H1 (cell line): ENCODE measurements at regions of chr1 and their contacts with region 1.

Region 1: GRCh38 chr1:160607011-160607671 is 27.8 kb upstream of the CD84 start:
- DNase-seq: no peak
- H3K4me3 ChIP-seq: no peak overlapping the region
- H3K27ac ChIP-seq: no peak overlapping the region
- H3K4me1 ChIP-seq: peaks cover 0 to 2% (median 0%) of the 10 kb centered on the region in 4 experiments; a peak in 1 of 7 replicates
- H3K27me3 ChIP-seq: no peaks in the 10 kb centered on the region
- CTCF ChIP-seq: peak in 2 of 3 experiments; percentile 84 to 86; a peak in 3 of 4 replicates
- EP300 ChIP-seq: no peak
- POLR2A ChIP-seq: no peak
- RAD21 ChIP-seq: peak; percentile 94

Region 2: GRCh38 chr1:160376525-160377131 is 230.5 kb before region 1 on chr1:
- CTCF ChIA-PET with region 1: interaction called, 14 read pairs
- POLR2A ChIA-PET with region 1: no interaction called
- DNase-seq: no peak
- H3K4me3 ChIP-seq: peak overlapping the region in 1 of 4 experiments; percentile 30; a peak in 1 of 8 replicates
- H3K27ac ChIP-seq: no peak overlapping the region
- H3K4me1 ChIP-seq: peaks cover 8 to 21% (median 16%) of the 10 kb centered on the region in 4 experiments
- H3K27me3 ChIP-seq: no peaks in the 10 kb centered on the region
- CTCF ChIP-seq: peak; percentile 20 to 100 (median 94)
- EP300 ChIP-seq: no peak
- POLR2A ChIP-seq: no peak
- RAD21 ChIP-seq: peak; percentile 98 to 99

Region 3: GRCh38 chr1:160534823-160535605 is 72.1 kb before region 1 on chr1:
- CTCF ChIA-PET with region 1: interaction called, 11 read pairs
- POLR2A ChIA-PET with region 1: no interaction called
- DNase-seq: no peak
- H3K4me3 ChIP-seq: no peak overlapping the region
- H3K27ac ChIP-seq: no peak overlapping the region
- H3K4me1 ChIP-seq: no peaks in the 10 kb centered on the region
- H3K27me3 ChIP-seq: no peaks in the 10 kb centered on the region
- CTCF ChIP-seq: peak in 2 of 3 experiments; percentile 34 to 68; a peak in 2 of 4 replicates
- EP300 ChIP-seq: no peak
- POLR2A ChIP-seq: no peak
- RAD21 ChIP-seq: peak; percentile 44 to 54

Region 4: GRCh38 chr1:160550572-160551034 is 56.5 kb before region 1 on chr1:
- CTCF ChIA-PET with region 1: interaction called, 88 read pairs
- POLR2A ChIA-PET with region 1: no interaction called
- DNase-seq: peak; percentile 17 to 81
- H3K4me3 ChIP-seq: no peak overlapping the region
- H3K27ac ChIP-seq: no peak overlapping the region
- H3K4me1 ChIP-seq: no peaks in the 10 kb centered on the region
- H3K27me3 ChIP-seq: no peaks in the 10 kb centered on the region
- CTCF ChIP-seq: peak; percentile 66 to 77 (median 75)
- EP300 ChIP-seq: no peak
- POLR2A ChIP-seq: no peak
- RAD21 ChIP-seq: peak; percentile 62 to 76

Region 5: GRCh38 chr1:160637821-160638539 is 30.8 kb after region 1 on chr1:
- CTCF ChIA-PET with region 1: no interaction called
- POLR2A ChIA-PET with region 1: no interaction called
- DNase-seq: no peak
- H3K4me3 ChIP-seq: no peak overlapping the region
- H3K27ac ChIP-seq: no peak overlapping the region
- H3K4me1 ChIP-seq: peaks cover 0 to 3% (median 0%) of the 10 kb centered on the region in 4 experiments; a peak in 1 of 7 replicates
- H3K27me3 ChIP-seq: no peaks in the 10 kb centered on the region
- CTCF ChIP-seq: no peak
- EP300 ChIP-seq: no peak
- POLR2A ChIP-seq: no peak
- RAD21 ChIP-seq: no peak

Region 6: DNA sequence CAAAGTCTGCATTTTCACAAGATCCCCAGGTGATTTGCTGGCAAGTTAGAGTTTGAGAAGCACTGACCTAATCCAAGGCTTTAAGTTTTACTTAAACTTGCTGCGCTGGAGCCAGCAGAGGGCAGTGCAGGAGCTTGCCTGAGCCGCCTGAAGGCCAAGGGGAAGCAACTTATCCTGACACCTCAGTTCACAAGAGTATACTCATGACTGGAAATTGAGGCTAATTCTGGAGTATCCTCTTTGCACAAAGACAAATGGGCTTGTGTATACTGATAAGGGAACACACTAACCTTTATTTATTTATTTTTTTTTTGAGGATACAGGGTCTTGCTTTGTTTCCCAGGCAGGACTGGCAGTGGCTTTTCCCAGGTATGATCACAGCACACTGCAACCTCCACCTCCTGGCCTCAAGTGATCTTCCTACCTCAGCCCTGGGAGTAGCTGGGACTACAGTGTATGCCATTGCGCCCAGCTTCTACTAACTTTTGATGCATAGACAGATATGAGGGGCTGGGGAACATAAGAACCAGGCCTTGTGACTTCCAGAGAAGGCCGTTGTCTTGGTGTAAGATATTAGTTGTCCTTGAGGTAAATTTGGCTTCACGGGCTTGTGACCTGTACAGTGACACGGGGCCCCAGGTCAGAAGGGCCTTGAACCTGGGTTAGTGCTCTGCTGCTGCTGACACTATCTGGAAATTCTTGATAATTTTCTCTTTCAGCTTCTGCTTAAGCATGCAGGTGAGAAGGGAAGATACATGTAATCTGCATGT is 68.7 kb after region 1 on chr1:
- CTCF ChIA-PET with region 1: interaction called, 11 read pairs
- POLR2A ChIA-PET with region 1: no interaction called
- DNase-seq: peak; percentile 43 to 71
- H3K4me3 ChIP-seq: no peak overlapping the region
- H3K27ac ChIP-seq: no peak overlapping the region
- H3K4me1 ChIP-seq: peaks cover 16 to 27% (median 16%) of the 10 kb centered on the region in 4 experiments
- H3K27me3 ChIP-seq: no peaks in the 10 kb centered on the region
- CTCF ChIP-seq: peak; percentile 74 to 91 (median 88)
- EP300 ChIP-seq: no peak
- POLR2A ChIP-seq: no peak
- RAD21 ChIP-seq: peak; percentile 68 to 81

Region 7: DNA sequence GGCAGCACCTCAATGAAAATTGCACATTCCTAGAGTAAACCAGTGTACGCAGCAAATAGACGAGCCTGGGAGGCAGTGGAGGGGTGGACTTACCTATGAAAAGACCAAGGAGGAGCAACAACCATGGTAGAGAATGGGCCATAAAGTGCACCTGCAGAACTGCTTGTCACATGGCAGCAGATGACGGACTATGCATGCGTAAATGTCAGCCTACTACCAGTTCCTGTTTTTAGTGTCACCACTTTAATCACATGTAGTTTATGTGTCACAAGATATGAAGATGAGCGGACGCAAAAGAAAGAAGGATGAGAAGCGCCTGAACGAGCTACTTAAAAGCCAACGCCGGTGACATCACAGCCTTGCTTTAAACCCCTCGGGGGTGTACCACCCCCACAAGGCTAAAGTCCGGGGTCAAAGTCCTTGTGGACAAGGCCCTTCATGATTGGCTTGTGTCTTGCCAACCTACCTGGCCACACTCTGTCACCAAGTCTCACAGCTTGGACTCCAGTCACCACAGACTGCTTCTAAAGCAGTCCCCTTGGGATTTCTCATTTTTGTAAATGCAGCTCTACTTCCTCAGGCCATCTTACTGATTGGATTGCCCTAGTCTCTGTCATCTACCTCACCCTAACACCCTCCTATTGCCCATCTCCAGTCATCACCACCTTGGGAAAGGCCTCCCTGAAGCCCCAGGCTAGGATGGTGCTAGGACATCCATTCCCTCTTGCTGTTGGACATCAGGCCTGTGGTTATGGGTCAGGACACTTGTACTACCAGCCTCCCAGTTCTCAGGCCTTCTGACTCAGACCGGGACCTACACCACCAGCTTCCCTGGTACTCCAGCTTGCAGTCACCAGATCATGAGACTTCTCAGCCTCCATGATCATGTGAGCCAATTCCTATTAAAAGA is 182.8 kb after region 1 on chr1:
- CTCF ChIA-PET with region 1: no interaction called
- POLR2A ChIA-PET with region 1: no interaction called
- DNase-seq: no peak
- H3K4me3 ChIP-seq: no peak overlapping the region
- H3K27ac ChIP-seq: no peak overlapping the region
- H3K4me1 ChIP-seq: no peaks in the 10 kb centered on the region
- H3K27me3 ChIP-seq: no peaks in the 10 kb centered on the region
- CTCF ChIP-seq: no peak
- EP300 ChIP-seq: no peak
- POLR2A ChIP-seq: no peak
- RAD21 ChIP-seq: no peak